ENCODE measurements at regions of chr7 and their contacts with region 1.

Region 1: GRCh38 chr7:139783647-139784385 is 6.0 kb upstream of the HIPK2 start:
- DNase-seq: peak in 1 of 2 experiments; percentile 55
- H3K4me3 ChIP-seq: no peak overlapping the region
- H3K27ac ChIP-seq: no peak overlapping the region
- H3K4me1 ChIP-seq: peaks cover 14% of the 10 kb centered on the region
- H3K27me3 ChIP-seq: no peaks in the 10 kb centered on the region
- CTCF ChIP-seq: no peak

Region 2: GRCh38 chr7:139359366-139360209 is 424.2 kb before region 1 on chr7 and contains the start of gene LUC7L2:
- CTCF ChIA-PET with region 1: no interaction called
- POLR2A ChIA-PET with region 1: no interaction called
- intact Hi-C with region 1: no loop called
- DNase-seq: peak; percentile 97 to 100
- H3K4me3 ChIP-seq: peak within 1 kb of the TSS; percentile 89
- H3K27ac ChIP-seq: peak within 1 kb of the TSS; percentile 97
- H3K4me1 ChIP-seq: peaks cover 27% of the 10 kb centered on the region
- H3K27me3 ChIP-seq: no peaks in the 10 kb centered on the region
- CTCF ChIP-seq: peak; percentile 4; the same call in 1 of the 2 replicates
- total RNA-seq, gene LUC7L2: 111 and 149 TPM in 2 replicates

Region 3: GRCh38 chr7:139635526-139636302 is 148.1 kb before region 1 on chr7:
- CTCF ChIA-PET with region 1: no interaction called
- POLR2A ChIA-PET with region 1: interaction called, 13 read pairs
- intact Hi-C with region 1: no loop called
- DNase-seq: no peak
- H3K4me3 ChIP-seq: no peak overlapping the region
- H3K27ac ChIP-seq: no peak overlapping the region
- H3K4me1 ChIP-seq: no peaks in the 10 kb centered on the region
- H3K27me3 ChIP-seq: no peaks in the 10 kb centered on the region
- CTCF ChIP-seq: no peak

Region 4: GRCh38 chr7:139702811-139703486 is 80.9 kb before region 1 on chr7:
- CTCF ChIA-PET with region 1: no interaction called
- POLR2A ChIA-PET with region 1: no interaction called
- intact Hi-C with region 1: no loop called
- DNase-seq: no peak
- H3K4me3 ChIP-seq: no peak overlapping the region
- H3K27ac ChIP-seq: no peak overlapping the region
- H3K4me1 ChIP-seq: no peaks in the 10 kb centered on the region
- H3K27me3 ChIP-seq: no peaks in the 10 kb centered on the region
- CTCF ChIP-seq: no peak